ENCODE measurements at regions of chr19 and their contacts with region 1.

Region 1: DNA sequence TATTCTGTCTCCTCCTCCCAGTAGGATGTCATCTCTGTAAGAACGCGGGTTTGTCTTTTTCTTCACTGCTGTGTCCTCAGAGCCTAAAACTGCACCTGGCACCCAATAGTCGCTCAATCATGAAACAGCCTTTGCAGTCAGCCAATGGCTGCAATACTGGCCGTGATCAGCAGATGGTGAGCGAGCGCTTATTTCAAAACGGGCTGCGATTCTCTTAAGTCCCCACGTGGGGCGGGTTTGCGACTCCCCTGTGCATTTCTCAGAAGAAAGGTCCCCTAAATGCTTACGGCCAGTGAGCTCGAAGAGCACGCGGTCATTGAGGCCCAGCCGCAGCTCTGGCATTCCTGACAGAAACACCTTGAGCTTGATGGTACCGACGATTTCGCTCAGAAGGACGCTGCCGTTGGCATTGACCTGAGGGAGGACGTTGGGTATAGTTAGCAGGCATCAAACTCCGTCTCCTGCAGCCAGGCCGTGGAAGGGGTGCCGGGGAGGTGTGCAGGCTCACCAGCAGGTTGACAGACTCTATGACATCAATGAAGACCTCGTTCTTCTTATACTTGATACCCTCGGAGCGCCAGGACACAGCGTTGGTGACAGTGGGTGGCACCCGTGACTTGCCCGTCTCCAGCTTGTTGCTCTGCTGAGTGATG is 6.0 kb downstream of the AP1M2 start:
- DNase-seq: peak; percentile 73 to 92
- ATAC-seq: peak; percentile 93

Region 2: GRCh38 chr19:10095948-10096621 is 485.0 kb before region 1 on chr19:
- intact Hi-C with region 1: no loop called
- DNase-seq: peak; percentile 85 to 90
- ATAC-seq: peak; percentile 92

Region 3: GRCh38 chr19:10625003-10625776 is 44.1 kb after region 1 on chr19 and contains the start of gene SLC44A2:
- intact Hi-C with region 1: no loop called
- DNase-seq: peak; percentile 92 to 95
- ATAC-seq: peak; percentile 96
- total RNA-seq, gene SLC44A2: 124 to 153 TPM

Region 4: GRCh38 chr19:10644260-10645007 is 63.3 kb after region 1 on chr19:
- intact Hi-C with region 1: loop called (anchors 5 kb)
- DNase-seq: peak; percentile 73 to 87
- ATAC-seq: peak; percentile 86

Region 5: GRCh38 chr19:10695401-10696398 is 114.6 kb after region 1 on chr19:
- intact Hi-C with region 1: loop called in 1 of 2 experiments (anchors 5 kb)
- DNase-seq: peak; percentile 93 to 96
- ATAC-seq: peak; percentile 99